GM23248 (cell line): ENCODE measurements at regions of chr13 and their contacts with region 1.

Region 1: DNA sequence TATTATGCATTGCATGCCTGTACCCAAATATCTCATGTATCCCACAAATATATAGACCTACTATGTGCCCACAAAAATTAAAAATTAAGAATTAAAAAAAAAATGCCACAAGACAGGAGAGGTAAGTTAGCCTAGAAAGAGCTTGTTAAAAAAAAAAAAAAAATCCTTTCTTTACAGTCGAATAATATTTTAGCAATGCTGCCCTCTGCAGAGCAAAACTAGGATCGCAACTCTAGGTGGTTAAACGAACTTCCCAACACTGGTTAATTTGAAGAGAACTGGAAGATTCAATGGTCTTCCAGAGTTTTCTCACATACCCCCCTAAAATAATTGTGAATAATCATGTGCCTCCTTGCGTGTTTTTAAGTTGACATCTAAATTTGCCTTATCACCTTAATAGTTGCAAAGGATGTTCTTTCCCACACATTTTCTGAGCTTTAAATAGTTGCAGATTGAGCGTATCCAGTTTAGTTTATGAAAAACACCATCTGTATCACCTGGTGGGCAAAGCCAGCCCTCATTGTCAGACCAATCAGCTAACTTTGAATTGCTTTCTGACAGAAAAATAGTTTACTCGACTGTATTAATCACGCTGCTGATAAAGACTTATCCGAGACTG is 47.4 kb upstream of the RCBTB2 start:
- DNase-seq: peak; percentile 68
- H3K4me3 ChIP-seq: no peak overlapping the region
- H3K27ac ChIP-seq: no peak overlapping the region
- H3K4me1 ChIP-seq: no peaks in the 10 kb centered on the region
- H3K27me3 ChIP-seq: no peaks in the 10 kb centered on the region

Region 2: GRCh38 chr13:47519626-47520025 is 1060.7 kb before region 1 on chr13:
- in situ Hi-C with region 1: no loop called
- DNase-seq: peak; percentile 7
- H3K4me3 ChIP-seq: no peak overlapping the region
- H3K27ac ChIP-seq: no peak overlapping the region
- H3K4me1 ChIP-seq: no peaks in the 10 kb centered on the region
- H3K27me3 ChIP-seq: no peaks in the 10 kb centered on the region

Region 3: DNA sequence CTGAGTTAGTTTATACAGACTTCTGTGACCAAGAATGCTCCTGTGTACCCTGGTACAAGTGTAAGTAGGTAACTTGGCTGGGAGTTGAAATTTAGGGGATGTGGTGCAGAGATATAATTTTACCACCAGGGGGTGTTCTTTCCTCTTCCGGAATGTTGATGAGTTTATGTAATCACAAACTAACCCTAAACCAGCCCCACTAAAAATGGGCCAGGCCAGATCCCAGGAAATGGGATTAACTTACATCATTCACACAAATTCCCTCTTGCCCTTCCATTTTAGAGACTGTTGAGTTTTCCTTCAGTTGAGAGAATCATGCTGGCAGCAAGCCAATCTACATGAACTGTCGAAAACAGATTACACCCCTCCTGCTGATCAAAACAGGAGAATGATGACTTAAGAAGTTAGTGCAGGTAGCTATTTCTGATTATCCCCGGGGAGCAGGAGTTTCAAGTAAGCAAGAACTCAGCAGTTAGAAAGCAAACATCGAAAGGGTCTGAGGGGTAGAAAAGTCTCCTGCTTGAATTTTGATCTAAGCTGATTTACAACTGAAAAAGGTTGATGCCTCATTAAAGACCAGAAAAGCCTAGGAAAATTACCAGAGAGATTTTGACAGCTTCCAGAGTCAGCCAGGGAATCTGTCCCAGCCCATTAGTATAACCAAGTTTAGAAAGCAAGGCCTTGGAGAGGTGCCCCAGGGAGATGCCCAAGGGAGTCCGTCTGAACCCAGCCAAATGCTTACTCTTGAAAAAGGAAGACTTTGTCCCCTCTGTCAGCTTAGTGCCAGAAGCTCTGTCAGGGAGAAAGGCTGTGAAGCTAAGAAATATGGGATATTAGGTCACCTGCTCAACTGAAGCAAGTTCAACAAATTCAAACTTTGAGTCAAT is 453.1 kb before region 1 on chr13:
- in situ Hi-C with region 1: loop called (anchors 10 kb)
- DNase-seq: peak; percentile 77
- H3K4me3 ChIP-seq: no peak overlapping the region
- H3K27ac ChIP-seq: no peak overlapping the region
- H3K4me1 ChIP-seq: peaks cover 11% of the 10 kb centered on the region; the same call in 1 of the 2 replicates
- H3K27me3 ChIP-seq: no peaks in the 10 kb centered on the region

Region 4: DNA sequence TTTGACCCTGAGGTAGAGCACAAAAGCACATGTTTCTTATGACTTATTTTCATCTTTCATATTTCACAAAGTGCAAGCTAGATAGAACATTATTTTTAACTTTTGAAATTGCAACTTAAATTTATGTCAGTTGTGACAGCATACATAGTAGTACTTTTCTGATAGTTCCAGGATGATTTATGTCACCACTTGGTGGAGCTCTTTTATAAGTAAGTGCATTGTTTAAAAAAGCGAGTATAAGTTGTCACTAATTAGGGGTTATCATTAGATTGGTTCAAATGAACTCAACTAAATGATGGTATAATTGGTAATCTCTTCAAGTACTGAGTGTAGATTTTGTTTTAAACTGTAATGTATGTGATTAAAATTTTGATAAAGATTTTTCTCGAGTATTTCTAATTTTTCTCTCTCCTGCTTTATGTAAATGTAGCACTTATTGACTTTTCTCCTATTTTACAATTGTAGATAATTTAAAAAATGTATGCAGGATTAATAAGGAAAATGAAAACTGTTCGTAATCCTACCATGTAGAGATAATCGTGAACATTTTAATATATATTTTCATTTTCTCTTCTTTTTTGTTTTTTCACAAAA is 245.7 kb before region 1 on chr13:
- in situ Hi-C with region 1: loop called (anchors 10 kb)
- DNase-seq: peak; percentile 59
- H3K4me3 ChIP-seq: no peak overlapping the region
- H3K27ac ChIP-seq: peak overlapping the region; percentile 36
- H3K4me1 ChIP-seq: peaks cover 13% of the 10 kb centered on the region
- H3K27me3 ChIP-seq: no peaks in the 10 kb centered on the region